Spleen (tissue), 13 donors: ENCODE measurements at regions of chr5 and their contacts with region 1.

Region 1: GRCh38 chr5:53109443-53110127 is at the start of gene MOCS2:
- DNase-seq: peak; percentile 97
- H3K4me3 ChIP-seq: peak within 1 kb of the TSS; percentile 65 to 85 (median 78)
- H3K27ac ChIP-seq: peak within 1 kb of the TSS; percentile 53 to 92 (median 88)
- H3K4me1 ChIP-seq: peaks cover 0 to 57% (median 25%) of the 10 kb centered on the region in 6 donors
- H3K27me3 ChIP-seq: no peaks in the 10 kb centered on the region
- CTCF ChIP-seq: peak in 1 of 11 experiments; percentile 12
- POLR2A ChIP-seq: peak in 2 of 3 donors; percentile 63 to 65
- total RNA-seq, gene MOCS2: 16.8 to 44.3 (median 24.4) TPM

Region 2: GRCh38 chr5:52799983-52800393 is 309.6 kb before region 1 on chr5:
- intact Hi-C with region 1: loop called (anchors 10 kb)
- DNase-seq: peak; percentile 99
- H3K4me3 ChIP-seq: peak overlapping the region; percentile 53 to 77 (median 65)
- H3K27ac ChIP-seq: peak overlapping the region; percentile 86 to 95 (median 94)
- H3K4me1 ChIP-seq: peaks cover 12 to 94% (median 70%) of the 10 kb centered on the region in 6 donors
- H3K27me3 ChIP-seq: no peaks in the 10 kb centered on the region
- CTCF ChIP-seq: peak in 1 of 11 experiments; percentile 21
- POLR2A ChIP-seq: peak in 2 of 3 donors; percentile 12 to 70